ENCODE measurements at regions of chr6 and their contacts with region 1.

Region 1: GRCh38 chr6:161370880-161371279 is 97.0 kb upstream of the AGPAT4 start:
- DNase-seq: peak; percentile 49 to 58
- ATAC-seq: peak; percentile 47

Region 2: DNA sequence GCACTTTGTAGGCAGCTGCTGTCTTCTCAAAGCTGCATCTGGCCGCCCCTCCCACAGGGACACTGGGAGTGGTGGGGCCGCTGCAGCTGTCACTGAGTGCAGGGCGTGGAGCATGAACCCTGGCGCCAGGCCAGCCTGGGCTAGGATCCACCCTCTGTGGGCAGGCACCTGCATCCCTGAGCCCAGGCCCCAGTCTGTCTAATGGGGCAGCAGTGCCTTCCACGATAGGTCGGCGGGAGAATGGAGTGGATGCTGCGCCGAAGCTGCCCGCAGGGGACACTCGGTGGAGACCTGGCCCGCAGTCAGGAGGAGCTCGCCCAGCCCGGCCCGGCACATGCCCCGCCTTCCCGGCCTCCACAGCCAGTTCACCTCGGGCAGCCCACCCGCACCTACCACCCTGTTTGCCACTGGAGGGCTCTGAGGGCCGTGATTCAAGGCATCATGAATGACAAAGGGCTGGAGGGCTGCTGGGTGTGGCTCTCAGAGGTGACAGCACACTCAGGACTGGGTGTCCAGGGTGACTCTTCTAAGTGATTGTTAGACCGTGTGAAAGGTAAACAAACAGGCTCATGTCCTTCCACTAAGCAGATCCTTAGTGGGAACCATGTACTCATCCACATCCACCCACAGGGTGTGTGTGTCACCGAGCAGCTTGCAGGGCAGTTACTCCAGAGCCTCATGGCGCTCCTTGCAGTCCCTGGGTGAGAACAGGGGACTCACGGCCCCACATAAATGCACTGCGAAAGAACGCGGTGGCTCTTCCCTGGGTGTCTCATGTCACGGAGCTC is 230.9 kb before region 1 on chr6:
- intact Hi-C with region 1: loop called in 1 of 2 experiments (anchors 10 kb)
- DNase-seq: peak; percentile 39 to 65
- ATAC-seq: peak; percentile 93